B cell (primary cell): ENCODE measurements at regions of chr11 and their contacts with region 1.

Region 1: GRCh38 chr11:66694732-66695207 is 17.1 kb upstream of the RBM4B start:
- DNase-seq: peak; percentile 88
- ATAC-seq: peak; percentile 92
- H3K4me3 ChIP-seq: no peak overlapping the region
- H3K4me3 Mint-ChIP-seq: no peak overlapping the region
- H3K27ac ChIP-seq: no peak overlapping the region
- H3K27ac Mint-ChIP-seq: no peak overlapping the region
- H3K4me1 ChIP-seq: peaks cover 3 to 5% of the 10 kb centered on the region in 2 donors
- H3K4me1 Mint-ChIP-seq: peaks cover 4% of the 10 kb centered on the region
- H3K27me3 ChIP-seq: no peaks in the 10 kb centered on the region
- H3K27me3 Mint-ChIP-seq: no peaks in the 10 kb centered on the region
- CTCF ChIP-seq: peak; percentile 95

Region 2: DNA sequence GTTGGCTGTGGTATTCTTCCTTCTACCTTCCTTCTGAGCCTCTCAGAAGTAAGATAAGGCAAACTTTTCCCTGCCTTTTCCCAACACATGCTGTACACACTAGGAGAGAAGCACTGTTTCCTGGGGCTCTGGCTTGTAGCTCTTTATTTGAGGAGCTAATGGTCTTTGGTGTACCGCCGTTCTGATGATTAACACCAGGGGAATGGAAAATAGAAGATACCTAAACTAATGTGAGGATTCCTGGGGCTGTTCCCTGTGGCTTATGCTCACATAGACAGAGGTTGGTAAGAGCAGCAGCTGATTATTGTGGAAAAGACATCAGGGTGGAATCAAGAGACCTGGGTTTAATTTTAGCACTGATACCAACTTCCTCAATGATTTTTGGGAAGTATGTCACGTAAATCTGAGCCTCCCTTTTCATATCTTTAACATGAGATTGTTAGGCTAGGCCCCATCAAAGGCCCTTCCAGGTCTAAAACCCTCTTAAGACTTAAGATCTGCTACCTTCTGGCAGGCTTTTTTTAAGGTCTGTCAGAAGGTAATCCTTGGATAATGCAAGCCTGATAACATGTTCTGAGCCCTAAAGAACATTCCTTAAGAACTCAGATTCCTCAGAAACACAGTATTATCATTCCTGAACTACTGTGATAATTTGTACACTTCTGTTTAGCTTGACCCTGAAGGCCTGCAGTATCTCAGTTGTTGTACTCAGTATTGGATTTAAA is 123.6 kb after region 1 on chr11:
- CTCF ChIA-PET with region 1: interaction called, 11 read pairs
- POLR2A ChIA-PET with region 1: no interaction called
- intact Hi-C with region 1: no loop called
- DNase-seq: no peak
- ATAC-seq: no peak
- H3K4me3 ChIP-seq: no peak overlapping the region
- H3K4me3 Mint-ChIP-seq: no peak overlapping the region
- H3K27ac ChIP-seq: no peak overlapping the region
- H3K27ac Mint-ChIP-seq: no peak overlapping the region
- H3K4me1 ChIP-seq: no peaks in the 10 kb centered on the region
- H3K4me1 Mint-ChIP-seq: no peaks in the 10 kb centered on the region
- H3K27me3 ChIP-seq: no peaks in the 10 kb centered on the region
- H3K27me3 Mint-ChIP-seq: no peaks in the 10 kb centered on the region
- CTCF ChIP-seq: no peak

Region 3: DNA sequence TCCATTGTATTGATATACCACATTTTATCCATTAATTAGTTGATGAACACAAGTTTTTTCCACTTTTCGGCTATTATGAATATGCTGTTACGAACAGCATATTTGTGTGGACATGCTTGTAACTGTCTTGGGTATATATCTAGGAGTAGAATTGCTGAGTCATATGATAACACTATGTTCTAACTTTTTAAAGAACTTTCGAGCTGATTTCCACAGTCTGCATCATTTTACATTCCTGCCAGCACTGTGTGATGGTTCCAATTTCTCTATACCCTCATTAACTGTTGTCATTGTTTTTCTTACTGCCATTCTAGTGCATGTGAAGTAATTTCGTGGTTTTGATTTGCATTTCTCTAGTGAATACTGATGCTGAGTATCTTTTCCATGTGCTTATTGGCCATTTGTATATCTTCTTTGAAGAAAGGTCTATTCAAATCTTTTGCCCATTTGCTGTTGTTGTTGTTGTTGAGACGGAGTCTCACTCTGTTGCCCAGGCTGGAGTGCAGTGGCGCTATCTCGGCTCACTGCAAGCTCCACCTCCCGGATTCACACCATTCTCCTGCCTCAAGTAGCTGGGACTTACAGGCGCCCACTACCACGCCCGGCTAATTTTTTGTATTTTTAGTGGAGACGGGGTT is 141.1 kb after region 1 on chr11:
- CTCF ChIA-PET with region 1: interaction called, 182 read pairs
- POLR2A ChIA-PET with region 1: interaction called, 6 read pairs
- intact Hi-C with region 1: no loop called
- DNase-seq: no peak
- ATAC-seq: no peak
- H3K4me3 ChIP-seq: no peak overlapping the region
- H3K4me3 Mint-ChIP-seq: no peak overlapping the region
- H3K27ac ChIP-seq: no peak overlapping the region
- H3K27ac Mint-ChIP-seq: peak overlapping the region; percentile 15
- H3K4me1 ChIP-seq: peaks cover 6 to 18% of the 10 kb centered on the region in 2 donors
- H3K4me1 Mint-ChIP-seq: peaks cover 32% of the 10 kb centered on the region
- H3K27me3 ChIP-seq: no peaks in the 10 kb centered on the region
- H3K27me3 Mint-ChIP-seq: no peaks in the 10 kb centered on the region
- CTCF ChIP-seq: no peak

Region 4: DNA sequence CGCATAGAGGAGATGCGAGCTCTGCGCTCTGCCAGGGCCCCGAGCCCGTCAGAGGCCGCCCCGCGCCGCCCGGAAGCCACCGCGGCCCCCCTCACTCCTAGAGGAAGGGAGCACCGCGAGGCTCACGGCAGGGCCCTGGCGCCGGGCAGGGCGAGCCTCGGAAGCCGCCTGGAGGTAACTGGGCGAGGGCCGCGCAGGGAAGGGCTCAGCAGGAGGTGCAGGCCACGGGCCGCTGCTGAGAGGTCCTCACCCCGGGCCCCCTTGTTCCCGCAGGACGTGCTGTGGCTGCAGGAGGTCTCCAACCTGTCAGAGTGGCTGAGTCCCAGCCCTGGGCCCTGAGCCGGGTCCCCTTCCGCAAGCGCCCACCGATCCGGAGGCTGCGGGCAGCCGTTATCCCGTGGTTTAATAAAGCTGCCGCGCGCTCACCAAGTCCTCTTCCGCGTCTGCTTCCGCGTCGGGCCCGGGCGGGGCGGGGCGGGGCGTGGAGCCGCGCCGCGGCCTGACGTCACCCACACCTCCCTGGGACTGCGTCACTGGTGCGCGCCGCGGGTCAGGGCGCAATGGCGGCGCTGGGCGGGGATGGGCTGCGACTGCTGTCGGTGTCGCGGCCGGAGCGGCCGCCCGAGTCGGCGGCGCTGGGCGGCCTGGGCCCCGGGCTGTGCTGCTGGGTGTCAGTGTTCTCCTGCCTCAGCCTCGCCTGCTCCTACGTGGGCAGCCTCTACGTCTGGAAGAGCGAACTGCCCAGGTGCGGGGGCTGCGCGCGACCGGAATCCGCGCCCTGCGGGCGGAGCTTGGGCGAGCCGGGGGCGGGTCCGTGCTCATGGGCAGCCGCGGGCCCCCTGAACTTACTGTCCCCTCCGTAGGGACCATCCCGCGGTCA is 148.4 kb after region 1 on chr11 and contains the start of gene RCE1:
- CTCF ChIA-PET with region 1: interaction called, 12 read pairs
- POLR2A ChIA-PET with region 1: no interaction called
- intact Hi-C with region 1: no loop called
- DNase-seq: peak; percentile 96
- ATAC-seq: peak; percentile 91
- H3K4me3 ChIP-seq: peak within 1 kb of the TSS; percentile 74 to 100 (median 95)
- H3K4me3 Mint-ChIP-seq: peak within 1 kb of the TSS; percentile 90
- H3K27ac ChIP-seq: peak within 1 kb of the TSS; percentile 98 to 99
- H3K27ac Mint-ChIP-seq: peak within 1 kb of the TSS; percentile 94
- H3K4me1 ChIP-seq: peaks cover 28 to 37% of the 10 kb centered on the region in 2 donors
- H3K4me1 Mint-ChIP-seq: peaks cover 43% of the 10 kb centered on the region
- H3K27me3 ChIP-seq: no peaks in the 10 kb centered on the region
- H3K27me3 Mint-ChIP-seq: no peaks in the 10 kb centered on the region
- CTCF ChIP-seq: no peak
- total RNA-seq, gene RCE1: 31.6 and 34.3 TPM in 2 replicates

Region 5: DNA sequence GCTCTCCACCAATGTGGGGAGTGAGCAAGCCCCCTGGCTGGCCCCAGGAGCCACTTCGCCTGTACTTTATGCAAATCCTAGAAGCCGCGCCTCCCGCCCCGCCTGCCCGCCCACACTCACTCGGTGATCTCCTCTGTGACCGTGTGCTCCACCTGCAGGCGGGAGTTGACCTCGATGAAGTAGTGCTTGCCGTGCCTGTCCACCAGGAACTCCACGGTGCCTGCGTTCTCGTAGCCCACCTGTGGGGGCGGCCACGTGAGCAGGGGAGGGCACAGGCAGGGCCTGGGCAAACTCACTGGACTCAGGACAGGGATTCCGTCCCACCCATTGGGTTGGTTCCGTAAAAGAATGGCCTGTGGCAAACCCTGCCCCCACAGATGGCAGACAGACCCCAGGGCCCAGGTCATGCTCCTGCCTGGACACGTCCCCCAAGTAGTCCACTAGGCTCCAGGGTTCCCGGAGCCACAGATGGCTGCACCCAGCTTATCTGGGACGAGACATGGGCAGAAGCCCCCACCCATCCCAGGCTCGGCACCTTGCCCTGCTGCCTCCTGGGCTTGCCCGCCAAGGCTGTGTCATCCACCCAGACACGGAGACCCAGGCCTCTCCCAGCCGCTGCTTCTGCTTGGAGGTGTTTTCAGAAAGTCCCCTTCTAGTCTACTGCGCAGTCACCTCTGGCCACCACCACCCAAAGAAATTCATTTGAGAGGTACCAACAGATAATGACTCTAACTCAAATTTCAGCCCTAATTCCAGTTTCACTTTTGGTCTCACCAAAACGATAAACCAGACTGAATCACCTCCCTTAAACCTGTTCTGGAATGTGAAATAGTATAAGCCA is 174.2 kb after region 1 on chr11:
- CTCF ChIA-PET with region 1: interaction called, 4 read pairs
- POLR2A ChIA-PET with region 1: no interaction called
- intact Hi-C with region 1: loop called (anchors 1 kb)
- DNase-seq: peak; percentile 89
- ATAC-seq: peak; percentile 98
- H3K4me3 ChIP-seq: peak overlapping the region in 2 of 5 experiments; percentile 19 to 20
- H3K4me3 Mint-ChIP-seq: peak overlapping the region; percentile 23
- H3K27ac ChIP-seq: no peak overlapping the region
- H3K27ac Mint-ChIP-seq: peak overlapping the region; percentile 39
- H3K4me1 ChIP-seq: peaks cover 4 to 10% of the 10 kb centered on the region in 2 donors
- H3K4me1 Mint-ChIP-seq: peaks cover 16% of the 10 kb centered on the region
- H3K27me3 ChIP-seq: no peaks in the 10 kb centered on the region
- H3K27me3 Mint-ChIP-seq: no peaks in the 10 kb centered on the region
- CTCF ChIP-seq: peak; percentile 89

Region 6: GRCh38 chr11:66883016-66883968 is 188.5 kb after region 1 on chr11:
- CTCF ChIA-PET with region 1: interaction called, 28 read pairs
- POLR2A ChIA-PET with region 1: no interaction called
- intact Hi-C with region 1: no loop called
- DNase-seq: peak; percentile 67
- ATAC-seq: peak; percentile 43
- H3K4me3 ChIP-seq: no peak overlapping the region
- H3K4me3 Mint-ChIP-seq: no peak overlapping the region
- H3K27ac ChIP-seq: no peak overlapping the region
- H3K27ac Mint-ChIP-seq: no peak overlapping the region
- H3K4me1 ChIP-seq: no peaks in the 10 kb centered on the region
- H3K4me1 Mint-ChIP-seq: no peaks in the 10 kb centered on the region
- H3K27me3 ChIP-seq: peaks cover 0 to 5% (median 0%) of the 10 kb centered on the region in 4 experiments
- H3K27me3 Mint-ChIP-seq: peaks cover 13% of the 10 kb centered on the region
- CTCF ChIP-seq: peak; percentile 75

Region 7: GRCh38 chr11:66976048-66976467 is 281.3 kb after region 1 on chr11:
- CTCF ChIA-PET with region 1: interaction called, 4 read pairs
- POLR2A ChIA-PET with region 1: no interaction called
- intact Hi-C with region 1: loop called (anchors 1 kb)
- DNase-seq: no peak
- ATAC-seq: no peak
- H3K4me3 ChIP-seq: no peak overlapping the region
- H3K4me3 Mint-ChIP-seq: no peak overlapping the region
- H3K27ac ChIP-seq: no peak overlapping the region
- H3K27ac Mint-ChIP-seq: no peak overlapping the region
- H3K4me1 ChIP-seq: no peaks in the 10 kb centered on the region
- H3K4me1 Mint-ChIP-seq: no peaks in the 10 kb centered on the region
- H3K27me3 ChIP-seq: peaks cover 0 to 10% (median 2%) of the 10 kb centered on the region in 4 experiments
- H3K27me3 Mint-ChIP-seq: peaks cover 16% of the 10 kb centered on the region
- CTCF ChIP-seq: peak; percentile 27